ENCODE measurements at regions of chr1 and their contacts with region 1.

Region 1: DNA sequence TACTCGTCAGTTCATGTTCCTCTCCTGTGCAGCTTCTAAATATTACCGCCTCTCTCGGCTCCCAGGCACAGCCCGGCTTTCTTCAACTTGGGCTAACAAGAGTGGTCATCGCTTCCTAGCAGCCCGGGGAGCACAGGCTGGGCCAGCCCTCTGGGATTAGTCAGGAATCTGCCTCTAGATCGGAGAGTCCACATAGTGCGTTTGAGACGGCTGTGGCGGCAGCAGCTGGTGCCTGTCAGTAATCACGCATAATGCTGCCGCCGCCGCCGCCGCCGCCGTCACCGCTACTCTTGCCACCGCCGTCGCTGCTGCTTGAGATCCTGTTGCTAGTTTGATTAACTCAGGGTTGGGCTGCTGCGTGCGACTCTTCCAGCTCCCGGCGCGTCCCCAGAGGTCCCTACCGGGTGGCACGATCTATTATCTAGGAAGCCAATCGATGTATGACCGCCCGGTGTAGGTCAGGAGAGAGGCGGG is at the start of gene RXRG:
- DNase-seq: peak; percentile 64 to 89
- ATAC-seq: peak; percentile 92 to 94 (median 93)
- H3K4me3 ChIP-seq: peak within 1 kb of the TSS; percentile 70
- H3K27ac ChIP-seq: peak within 1 kb of the TSS; percentile 80
- H3K4me1 ChIP-seq: peaks cover 18% of the 10 kb centered on the region
- H3K27me3 ChIP-seq: peaks cover 0 to 4% (median 0%) of the 10 kb centered on the region in 3 donors
- CTCF ChIP-seq: no peak
- total RNA-seq, gene RXRG: 2.8 to 20.4 (median 10.7) TPM

Region 2: GRCh38 chr1:165063181-165063965 is 381.6 kb before region 1 on chr1:
- intact Hi-C with region 1: no loop called
- DNase-seq: no peak
- ATAC-seq: no peak
- H3K4me3 ChIP-seq: no peak overlapping the region
- H3K27ac ChIP-seq: no peak overlapping the region
- H3K4me1 ChIP-seq: no peaks in the 10 kb centered on the region
- H3K27me3 ChIP-seq: no peaks in the 10 kb centered on the region
- CTCF ChIP-seq: no peak

Region 3: DNA sequence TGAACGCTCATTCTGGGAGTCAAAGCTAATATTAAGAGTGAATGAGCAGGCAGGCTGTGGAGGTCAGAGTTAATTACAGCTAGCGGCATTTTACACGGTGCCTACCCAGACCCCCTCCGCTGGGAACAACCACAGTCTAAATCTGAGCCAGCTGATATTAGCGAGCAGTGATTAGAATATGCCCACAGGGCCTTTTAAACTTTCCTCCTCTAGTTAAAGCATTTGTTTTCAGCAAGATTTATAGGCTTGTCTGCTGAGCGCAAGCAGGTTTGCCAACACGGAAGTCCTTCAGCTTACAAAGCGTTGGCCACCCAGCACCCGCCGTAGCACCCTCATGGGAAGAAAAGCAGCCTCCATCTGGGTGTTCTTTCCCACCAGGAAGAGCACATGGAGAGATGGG is 160.5 kb before region 1 on chr1:
- intact Hi-C with region 1: no loop called
- DNase-seq: no peak
- ATAC-seq: no peak
- H3K4me3 ChIP-seq: no peak overlapping the region
- H3K27ac ChIP-seq: no peak overlapping the region
- H3K4me1 ChIP-seq: no peaks in the 10 kb centered on the region
- H3K27me3 ChIP-seq: peaks cover 0 to 10% (median 0%) of the 10 kb centered on the region in 3 donors
- CTCF ChIP-seq: no peak

Region 4: GRCh38 chr1:165496501-165496900 is 51.6 kb after region 1 on chr1:
- intact Hi-C with region 1: loop called (anchors 5 kb)
- DNase-seq: no peak
- ATAC-seq: no peak
- H3K4me3 ChIP-seq: no peak overlapping the region
- H3K27ac ChIP-seq: no peak overlapping the region
- H3K4me1 ChIP-seq: no peaks in the 10 kb centered on the region
- H3K27me3 ChIP-seq: no peaks in the 10 kb centered on the region
- CTCF ChIP-seq: no peak

Region 5: DNA sequence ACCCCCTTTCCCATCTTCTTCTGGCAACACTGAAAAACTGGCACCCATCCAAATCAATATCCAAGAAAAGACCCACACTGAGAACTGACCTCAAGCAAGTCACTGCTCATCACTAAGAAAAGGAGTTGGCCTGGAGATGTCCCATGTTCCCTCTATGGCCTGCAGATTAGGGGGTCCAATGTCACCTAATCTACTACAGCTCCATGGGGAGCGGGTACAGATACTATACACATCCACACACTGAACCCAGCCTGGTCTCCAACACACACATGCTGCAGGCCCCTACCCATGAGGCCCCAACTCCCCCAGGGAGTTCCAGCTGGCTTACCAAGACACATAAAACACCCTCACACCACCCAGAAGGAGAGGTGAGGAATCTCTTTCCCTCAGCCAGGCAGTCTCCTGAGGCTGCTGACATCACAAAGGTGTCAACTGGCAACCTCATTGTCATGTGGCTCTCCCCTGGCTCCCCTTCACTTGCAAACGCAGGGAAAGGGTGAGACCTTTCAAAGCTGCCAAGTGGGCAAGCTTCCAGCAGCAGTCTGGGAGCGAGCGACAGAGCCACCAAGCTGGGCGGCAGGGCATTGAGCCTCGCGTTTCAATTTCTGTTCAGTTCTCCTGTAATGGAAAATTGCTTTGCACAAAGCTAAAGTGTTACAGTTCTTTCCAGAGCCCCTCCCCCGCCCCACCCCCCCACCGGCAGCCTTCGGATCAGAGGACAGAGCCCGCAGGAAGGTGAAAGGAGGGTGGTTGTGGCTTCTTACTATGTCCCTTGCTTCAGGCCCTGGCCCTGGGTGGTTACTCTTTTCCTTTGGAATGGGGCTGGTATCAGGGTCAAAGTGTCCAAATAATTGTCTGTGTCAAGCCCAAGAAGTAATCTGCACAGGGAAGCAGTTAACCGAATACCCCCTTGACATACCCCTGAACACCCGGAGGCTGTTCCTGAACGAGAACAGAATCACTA is 98.9 kb after region 1 on chr1 and contains the start of gene LRRC52:
- intact Hi-C with region 1: loop called in 1 of 2 experiments (anchors 5 kb)
- DNase-seq: peak; percentile 61 to 87
- ATAC-seq: peak; percentile 60 to 76 (median 72)
- H3K4me3 ChIP-seq: no peak within 1 kb of the TSS
- H3K27ac ChIP-seq: peak within 1 kb of the TSS; percentile 48
- H3K4me1 ChIP-seq: peaks cover 32% of the 10 kb centered on the region
- H3K27me3 ChIP-seq: no peaks in the 10 kb centered on the region
- CTCF ChIP-seq: peak; percentile 9
- total RNA-seq, gene LRRC52: not detected

Region 6: DNA sequence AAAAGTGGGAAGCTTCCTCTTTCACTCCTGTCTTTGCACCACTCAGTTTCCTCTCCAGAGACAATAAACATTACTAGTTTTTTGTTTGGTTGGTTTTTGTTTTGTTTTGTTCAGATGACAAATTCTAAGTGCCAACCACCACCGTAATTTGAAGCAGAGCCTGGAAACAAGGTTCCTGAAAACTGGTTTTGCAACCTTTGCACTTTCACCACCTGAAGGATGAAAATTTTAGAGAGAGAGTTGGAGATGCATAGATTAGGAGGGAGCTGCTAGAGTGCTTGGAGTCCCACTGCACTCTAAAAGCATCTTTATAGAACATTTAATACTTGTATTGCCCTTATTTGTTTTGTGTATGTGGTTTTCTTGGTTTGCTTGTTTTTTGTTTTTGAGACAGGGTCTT is 166.0 kb after region 1 on chr1:
- intact Hi-C with region 1: no loop called
- DNase-seq: no peak
- ATAC-seq: no peak
- H3K4me3 ChIP-seq: no peak overlapping the region
- H3K27ac ChIP-seq: no peak overlapping the region
- H3K4me1 ChIP-seq: no peaks in the 10 kb centered on the region
- H3K27me3 ChIP-seq: no peaks in the 10 kb centered on the region
- CTCF ChIP-seq: no peak

Measured in psoas muscle (tissue), 8 donors.